Calu3 (cell line): ENCODE measurements at regions of chr3 and their contacts with region 1.

Region 1: DNA sequence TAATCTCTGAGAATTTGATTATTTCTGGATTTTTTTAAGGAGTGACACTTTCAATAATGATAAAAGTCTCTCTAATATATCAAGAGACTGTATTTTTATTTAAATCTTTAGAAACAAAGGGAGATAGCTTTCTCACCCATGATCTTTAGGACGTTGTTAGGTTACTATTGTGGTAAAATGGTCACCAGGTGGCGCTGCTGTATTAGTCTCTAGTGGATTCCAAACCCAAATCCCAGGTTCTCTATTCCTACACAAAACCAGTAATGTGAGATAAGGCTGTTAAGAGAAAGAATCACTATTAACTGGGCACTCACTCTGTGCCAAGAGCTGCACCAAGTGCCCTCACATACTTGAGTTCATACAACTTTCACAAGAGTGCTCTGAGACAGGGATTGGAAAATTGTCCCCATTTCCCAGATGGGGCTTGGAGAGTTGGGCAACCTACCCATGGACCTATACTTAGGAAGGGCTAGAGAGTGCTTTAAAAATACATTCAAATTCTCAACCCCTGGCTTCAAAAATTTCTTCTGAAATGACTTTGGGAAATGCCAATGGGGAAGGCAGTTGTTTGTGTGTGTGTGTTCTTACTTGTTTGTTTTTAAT is 593.4 kb upstream of the TGFBR2 start:
- DNase-seq: peak; percentile 72
- H3K4me3 Mint-ChIP-seq: no peak overlapping the region
- H3K27ac Mint-ChIP-seq: no peak overlapping the region
- H3K4me1 Mint-ChIP-seq: peaks cover 22% of the 10 kb centered on the region
- H3K27me3 Mint-ChIP-seq: no peaks in the 10 kb centered on the region
- CTCF ChIP-seq: no peak

Region 2: DNA sequence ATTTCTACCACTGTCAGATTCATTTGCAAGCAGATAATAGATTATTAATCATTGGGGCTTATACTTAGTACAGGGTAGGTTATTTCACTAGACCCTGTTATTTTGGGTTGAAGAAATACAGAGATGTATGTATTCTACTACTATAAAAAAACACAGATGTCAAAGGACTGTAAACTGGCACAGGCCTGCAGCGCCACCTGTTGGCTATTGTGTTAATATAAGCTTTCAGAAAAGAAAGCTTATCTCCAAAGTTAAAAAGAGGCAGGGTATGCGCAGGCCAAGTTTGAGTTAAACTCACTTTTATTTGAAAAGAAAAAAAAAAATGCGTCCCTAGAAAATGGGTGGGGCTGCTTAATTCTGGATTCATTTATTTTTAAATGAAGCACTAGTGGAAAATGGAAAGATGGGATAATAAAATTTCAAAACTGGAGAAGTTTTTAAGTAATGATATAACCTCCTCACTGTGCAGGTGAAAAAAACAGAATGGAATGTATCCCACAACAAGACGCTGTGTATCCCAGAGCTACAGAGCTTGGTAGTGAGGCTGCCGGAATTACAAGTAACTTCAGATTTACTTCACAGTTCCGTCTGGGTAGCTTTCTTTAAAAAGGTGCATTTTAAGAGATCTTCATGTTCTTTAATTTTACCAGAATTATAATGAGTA is 186.2 kb after region 1 on chr3:
- CTCF ChIA-PET with region 1: interaction called, 12 read pairs
- intact Hi-C with region 1: loop called (anchors 10 kb)
- DNase-seq: peak; percentile 58
- H3K4me3 Mint-ChIP-seq: no peak overlapping the region
- H3K27ac Mint-ChIP-seq: no peak overlapping the region
- H3K4me1 Mint-ChIP-seq: no peaks in the 10 kb centered on the region
- H3K27me3 Mint-ChIP-seq: no peaks in the 10 kb centered on the region
- CTCF ChIP-seq: peak; percentile 68

Region 3: DNA sequence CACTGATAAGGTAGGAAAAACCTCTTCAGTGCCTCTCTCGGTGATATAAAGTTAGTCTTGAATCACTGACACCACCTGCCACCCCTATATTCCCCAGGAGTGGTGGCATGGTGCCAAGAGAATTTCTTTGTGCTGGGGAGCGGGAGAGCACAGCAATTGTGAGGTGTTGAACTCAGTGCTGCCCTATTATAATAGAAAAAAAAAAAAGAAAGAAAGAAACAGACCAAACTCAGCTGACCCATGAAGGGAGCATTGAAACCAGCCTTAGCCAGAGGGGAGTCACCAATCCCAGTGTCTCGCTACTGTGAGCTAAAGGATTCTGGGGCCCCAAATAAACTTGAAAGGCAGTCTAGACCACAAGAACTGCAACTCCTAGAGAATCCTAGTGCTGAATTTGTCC is 1318.3 kb after region 1 on chr3:
- CTCF ChIA-PET with region 1: no interaction called
- intact Hi-C with region 1: no loop called
- DNase-seq: no peak
- H3K4me3 Mint-ChIP-seq: no peak overlapping the region
- H3K27ac Mint-ChIP-seq: no peak overlapping the region
- H3K4me1 Mint-ChIP-seq: no peaks in the 10 kb centered on the region
- H3K27me3 Mint-ChIP-seq: no peaks in the 10 kb centered on the region
- CTCF ChIP-seq: no peak